ENCODE measurements at regions of chr1 and their contacts with region 1.

Region 1: GRCh38 chr1:92817986-92818764 is 13.7 kb upstream of the RPL5 start:
- DNase-seq: no peak
- ATAC-seq: peak; percentile 90
- H3K4me3 ChIP-seq: no peak overlapping the region
- H3K27ac ChIP-seq: no peak overlapping the region
- H3K4me1 ChIP-seq: no peaks in the 10 kb centered on the region
- H3K27me3 ChIP-seq: no peaks in the 10 kb centered on the region
- CTCF ChIP-seq: peak; percentile 62 to 86 (median 77)
- EP300 ChIP-seq: no peak
- POLR2A ChIP-seq: no peak
- RAD21 ChIP-seq: peak; percentile 73

Region 2: GRCh38 chr1:92653617-92654381 is 164.4 kb before region 1 on chr1:
- CTCF ChIA-PET with region 1: no interaction called
- POLR2A ChIA-PET with region 1: no interaction called
- RAD21 ChIA-PET with region 1: no interaction called
- SMC1A ChIA-PET with region 1: no interaction called
- in situ Hi-C with region 1: no loop called
- intact Hi-C with region 1: no loop called
- DNase-seq: no peak
- ATAC-seq: no peak
- H3K4me3 ChIP-seq: no peak overlapping the region
- H3K27ac ChIP-seq: no peak overlapping the region
- H3K4me1 ChIP-seq: no peaks in the 10 kb centered on the region
- H3K27me3 ChIP-seq: no peaks in the 10 kb centered on the region; a peak in 1 of 4 replicates
- CTCF ChIP-seq: no peak
- EP300 ChIP-seq: no peak
- POLR2A ChIP-seq: no peak
- RAD21 ChIP-seq: no peak

Region 3: DNA sequence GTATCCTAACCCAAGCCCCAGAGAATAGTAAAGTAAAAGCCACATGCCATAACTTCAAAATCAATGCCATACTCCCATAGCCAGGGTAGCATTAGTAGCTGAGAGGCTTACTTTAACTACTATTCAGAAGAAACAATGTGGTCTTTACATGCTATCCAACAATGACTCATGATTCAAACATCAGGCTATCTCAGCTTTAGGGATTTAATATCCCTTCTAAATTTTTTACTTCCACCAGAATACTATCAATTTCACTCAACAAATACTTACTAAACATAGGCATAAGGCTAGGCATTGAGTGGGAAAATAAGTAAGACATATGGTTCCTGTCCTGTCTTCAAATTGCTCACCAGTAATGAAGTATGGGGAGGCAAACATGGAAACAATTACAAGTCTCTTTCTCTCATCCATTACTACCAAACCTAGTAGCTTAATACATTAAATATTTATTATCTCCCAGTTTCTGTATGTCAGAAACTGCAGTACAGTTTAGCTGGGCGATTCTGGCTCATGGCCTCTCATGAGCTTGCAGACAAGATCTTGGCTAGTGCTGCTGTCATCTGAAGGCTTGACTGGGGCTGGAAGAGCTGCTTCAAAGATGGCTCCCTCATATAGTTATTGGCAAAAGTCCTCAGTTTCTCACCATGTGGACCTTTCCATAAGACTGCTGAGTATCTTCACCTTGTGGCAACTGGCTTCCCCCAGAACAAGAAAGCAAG is 64.0 kb before region 1 on chr1:
- CTCF ChIA-PET with region 1: interaction called, 178 read pairs
- POLR2A ChIA-PET with region 1: interaction called, 3 read pairs
- RAD21 ChIA-PET with region 1: interaction called, 65 read pairs
- SMC1A ChIA-PET with region 1: interaction called, 56 read pairs
- in situ Hi-C with region 1: loop called (anchors 5 kb)
- intact Hi-C with region 1: loop called (anchors 1 kb)
- DNase-seq: no peak
- ATAC-seq: no peak
- H3K4me3 ChIP-seq: no peak overlapping the region
- H3K27ac ChIP-seq: no peak overlapping the region
- H3K4me1 ChIP-seq: no peaks in the 10 kb centered on the region
- H3K27me3 ChIP-seq: no peaks in the 10 kb centered on the region
- CTCF ChIP-seq: no peak
- EP300 ChIP-seq: no peak
- POLR2A ChIP-seq: no peak
- RAD21 ChIP-seq: no peak